PC-3 (cell line): ENCODE measurements at regions of chr3 and their contacts with region 1.

Region 1: GRCh38 chr3:51384726-51385473 is at the start of gene MANF:
- DNase-seq: peak; percentile 98
- ATAC-seq: peak; percentile 91
- H3K4me3 ChIP-seq: peak within 1 kb of the TSS; percentile 85
- H3K27ac ChIP-seq: peak within 1 kb of the TSS; percentile 79
- H3K4me1 ChIP-seq: peaks cover 40% of the 10 kb centered on the region
- H3K27me3 ChIP-seq: no peaks in the 10 kb centered on the region
- CTCF ChIP-seq: no peak
- total RNA-seq, gene MANF: 200 and 221 TPM in 2 replicates

Region 2: DNA sequence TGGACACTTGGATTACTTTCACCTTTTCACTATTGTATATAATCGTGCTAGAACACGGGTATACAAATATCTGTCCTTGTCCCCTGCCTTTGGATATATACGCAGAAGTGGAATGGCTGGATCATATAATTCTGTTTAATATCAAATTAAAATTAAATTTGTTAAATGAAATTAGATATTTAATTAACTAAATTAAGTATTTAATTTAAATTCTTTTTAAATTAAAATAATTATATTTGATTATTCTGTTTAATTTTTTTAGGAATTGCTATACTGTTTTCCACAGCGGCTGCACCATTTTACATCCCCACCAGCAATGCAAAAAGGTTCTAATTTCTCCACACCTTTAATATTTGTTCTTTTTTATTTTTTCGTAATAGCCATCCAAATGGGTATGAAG is 625.9 kb before region 1 on chr3:
- CTCF ChIA-PET with region 1: no interaction called
- POLR2A ChIA-PET with region 1: interaction called, 12 read pairs
- intact Hi-C with region 1: no loop called
- DNase-seq: no peak
- ATAC-seq: no peak
- H3K4me3 ChIP-seq: no peak overlapping the region
- H3K27ac ChIP-seq: no peak overlapping the region
- H3K4me1 ChIP-seq: no peaks in the 10 kb centered on the region
- H3K27me3 ChIP-seq: peaks cover 47% of the 10 kb centered on the region
- CTCF ChIP-seq: no peak

Region 3: GRCh38 chr3:50786631-50787030 is 598.3 kb before region 1 on chr3:
- CTCF ChIA-PET with region 1: no interaction called
- POLR2A ChIA-PET with region 1: interaction called, 11 read pairs
- intact Hi-C with region 1: no loop called
- DNase-seq: no peak
- ATAC-seq: no peak
- H3K4me3 ChIP-seq: no peak overlapping the region
- H3K27ac ChIP-seq: no peak overlapping the region
- H3K4me1 ChIP-seq: no peaks in the 10 kb centered on the region
- H3K27me3 ChIP-seq: peaks cover 11% of the 10 kb centered on the region; the same call in 1 of the 2 replicates
- CTCF ChIP-seq: no peak

Region 4: DNA sequence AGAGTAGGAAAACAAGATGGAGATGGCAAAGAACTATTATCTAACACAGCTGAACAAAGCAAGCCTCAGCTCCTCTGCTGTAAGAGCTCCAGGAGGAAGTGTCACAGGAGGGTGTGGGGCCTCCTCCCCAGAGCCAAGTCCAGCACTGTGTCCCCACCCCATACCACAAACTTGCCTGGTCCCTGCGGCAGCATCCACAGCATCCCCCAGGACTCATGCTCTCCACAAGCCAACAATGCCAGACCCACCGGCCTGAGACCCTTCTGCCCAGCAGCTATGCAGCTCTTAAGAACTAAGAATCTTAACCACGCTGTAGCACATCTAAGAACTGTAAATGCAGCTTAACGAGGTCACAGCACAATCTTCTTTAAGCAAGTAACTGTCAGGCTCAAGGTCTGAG is 15.3 kb after region 1 on chr3:
- CTCF ChIA-PET with region 1: no interaction called
- POLR2A ChIA-PET with region 1: no interaction called
- intact Hi-C with region 1: no loop called
- DNase-seq: no peak
- ATAC-seq: no peak
- H3K4me3 ChIP-seq: no peak overlapping the region
- H3K27ac ChIP-seq: no peak overlapping the region
- H3K4me1 ChIP-seq: no peaks in the 10 kb centered on the region
- H3K27me3 ChIP-seq: no peaks in the 10 kb centered on the region
- CTCF ChIP-seq: no peak

Region 5: DNA sequence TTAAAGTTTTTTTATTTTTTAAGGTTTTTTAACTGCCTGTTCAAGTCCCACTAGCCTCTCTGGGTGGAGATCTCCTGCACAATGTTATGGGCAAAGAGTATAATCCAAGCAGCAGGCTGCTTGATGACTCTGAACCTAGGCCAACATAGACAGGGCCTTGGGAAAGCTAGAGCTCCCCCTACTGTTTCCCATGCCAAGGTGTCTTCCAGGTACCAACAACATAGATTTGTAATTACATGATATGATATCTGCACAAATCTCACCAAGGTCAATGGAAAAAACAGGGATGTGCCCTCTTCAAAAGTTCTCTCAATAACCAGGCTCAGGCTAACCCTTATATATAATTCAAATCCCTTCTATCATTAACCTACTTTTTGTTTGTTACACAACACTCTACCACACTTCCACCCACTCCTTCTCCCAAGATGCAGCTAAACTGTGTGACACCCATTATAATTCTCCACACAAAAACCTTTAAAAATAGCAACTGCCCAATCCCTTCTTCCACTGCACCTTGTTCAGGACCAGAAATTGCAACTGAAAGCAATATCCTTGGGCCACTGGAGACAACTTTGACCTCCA is 49.9 kb after region 1 on chr3:
- CTCF ChIA-PET with region 1: no interaction called
- POLR2A ChIA-PET with region 1: no interaction called
- intact Hi-C with region 1: no loop called
- DNase-seq: peak; percentile 64
- ATAC-seq: peak; percentile 94
- H3K4me3 ChIP-seq: no peak overlapping the region
- H3K27ac ChIP-seq: no peak overlapping the region
- H3K4me1 ChIP-seq: no peaks in the 10 kb centered on the region
- H3K27me3 ChIP-seq: no peaks in the 10 kb centered on the region
- CTCF ChIP-seq: peak; percentile 91

Region 6: GRCh38 chr3:51471775-51472652 is 87.1 kb after region 1 on chr3:
- CTCF ChIA-PET with region 1: no interaction called
- POLR2A ChIA-PET with region 1: no interaction called
- intact Hi-C with region 1: no loop called
- DNase-seq: no peak
- ATAC-seq: no peak
- H3K4me3 ChIP-seq: no peak overlapping the region
- H3K27ac ChIP-seq: no peak overlapping the region
- H3K4me1 ChIP-seq: no peaks in the 10 kb centered on the region
- H3K27me3 ChIP-seq: no peaks in the 10 kb centered on the region
- CTCF ChIP-seq: no peak

Region 7: DNA sequence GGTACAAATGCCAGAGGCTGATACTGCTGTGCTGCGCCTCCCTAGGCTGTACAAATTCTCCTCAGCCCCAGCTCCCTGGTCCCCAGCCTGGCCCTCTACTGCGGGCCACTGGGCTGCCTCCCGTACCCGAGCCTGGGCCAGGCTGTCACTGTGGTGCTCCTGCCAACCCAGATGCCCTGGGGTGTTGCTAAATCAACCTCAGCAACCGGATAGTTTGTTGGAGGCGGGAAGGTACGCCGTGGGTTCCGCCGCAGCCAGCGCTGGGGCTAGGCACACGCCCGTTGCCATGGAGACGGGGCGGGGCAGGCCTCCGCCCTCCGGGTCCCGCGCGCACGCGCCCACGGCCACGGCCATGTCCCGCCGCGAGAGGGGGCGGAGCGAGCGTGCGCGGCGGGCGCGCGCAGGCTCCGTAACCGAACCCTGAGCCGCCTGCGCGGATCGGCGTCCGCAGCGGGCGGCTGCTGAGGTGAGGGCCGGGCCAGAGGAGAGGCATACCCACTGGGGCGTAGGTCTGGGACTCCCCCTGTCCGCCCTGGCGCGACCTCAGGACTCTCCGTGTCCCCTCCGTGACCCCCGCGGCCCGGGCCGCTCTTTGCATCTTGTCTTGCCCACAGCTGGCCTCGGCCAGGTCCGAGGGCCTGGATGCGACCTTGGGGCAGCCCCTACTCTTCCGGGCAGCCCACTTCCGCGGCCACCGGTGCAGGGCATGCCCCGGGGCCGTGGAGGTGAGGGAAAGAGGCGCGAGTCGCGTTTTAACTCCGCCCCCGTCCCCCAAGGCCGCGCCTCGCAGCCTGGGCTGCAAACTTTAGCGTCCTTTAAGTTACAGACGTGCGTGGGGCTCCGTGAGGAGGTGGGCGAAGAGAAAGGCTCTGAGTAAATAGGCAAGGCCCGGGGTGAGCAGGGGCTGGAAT is 286.2 kb after region 1 on chr3 and contains the start of gene TEX264:
- CTCF ChIA-PET with region 1: no interaction called
- POLR2A ChIA-PET with region 1: interaction called, 9 read pairs
- intact Hi-C with region 1: loop called (anchors 10 kb)
- DNase-seq: peak; percentile 95
- ATAC-seq: peak; percentile 67
- H3K4me3 ChIP-seq: peak within 1 kb of the TSS; percentile 91
- H3K27ac ChIP-seq: peak within 1 kb of the TSS; percentile 64
- H3K4me1 ChIP-seq: peaks cover 57% of the 10 kb centered on the region
- H3K27me3 ChIP-seq: no peaks in the 10 kb centered on the region
- CTCF ChIP-seq: no peak
- total RNA-seq, gene TEX264: 85.5 and 88.1 TPM in 2 replicates